Ascending aorta (tissue), 2 donors: ENCODE measurements at regions of chr5 and their contacts with region 1.

Region 1: GRCh38 chr5:7391814-7392692 is 3.9 kb upstream of the ADCY2 start:
- DNase-seq: no peak
- H3K4me3 ChIP-seq: no peak overlapping the region
- H3K27ac ChIP-seq: no peak overlapping the region
- H3K4me1 ChIP-seq: peaks cover 3% of the 10 kb centered on the region in 2 donors
- H3K27me3 ChIP-seq: no peaks in the 10 kb centered on the region
- CTCF ChIP-seq: peak; percentile 13 to 65 (median 54)

Region 2: DNA sequence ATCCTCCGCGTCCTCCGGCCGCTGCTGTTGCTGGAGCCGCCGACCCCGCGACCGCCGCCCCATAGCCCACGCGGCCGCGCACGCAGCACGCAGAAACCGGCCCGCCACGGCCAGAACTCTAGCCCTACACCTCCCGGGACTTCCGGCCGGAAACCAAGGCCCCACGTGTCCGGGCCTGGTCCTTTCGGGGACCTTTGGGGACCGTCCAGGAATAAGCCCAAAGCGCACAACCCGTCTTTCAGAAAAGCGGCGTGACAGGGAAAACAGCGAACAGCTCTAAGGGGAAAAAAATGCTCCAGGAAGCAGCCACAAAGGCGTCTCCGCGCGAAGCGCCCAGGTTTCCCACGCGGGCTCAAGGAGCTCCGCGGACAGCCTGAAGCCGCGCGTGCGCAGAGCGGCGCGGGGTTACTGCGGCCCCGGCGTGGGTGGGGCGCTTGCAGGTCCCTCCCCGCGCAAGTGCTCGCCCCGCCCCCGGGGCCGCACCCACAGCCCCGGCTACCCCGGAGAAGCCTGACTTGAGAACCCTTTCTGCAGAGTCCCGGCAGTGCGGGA is 759.1 kb before region 1 on chr5 and contains the starts of genes NSUN2 and SRD5A1:
- intact Hi-C with region 1: loop called (anchors 10 kb)
- DNase-seq: peak; percentile 56 to 95
- H3K4me3 ChIP-seq: peak within 1 kb of the TSS; percentile 74 to 87
- H3K27ac ChIP-seq: peak within 1 kb of the TSS; percentile 83 to 97
- H3K4me1 ChIP-seq: peaks cover 0 to 14% of the 10 kb centered on the region in 2 donors
- H3K27me3 ChIP-seq: no peaks in the 10 kb centered on the region
- CTCF ChIP-seq: no peak
- total RNA-seq, gene NSUN2: 19.1 TPM
- total RNA-seq, gene SRD5A1: 186 TPM

Region 3: GRCh38 chr5:7261049-7261448 is 131.0 kb before region 1 on chr5:
- intact Hi-C with region 1: loop called (anchors 10 kb)
- DNase-seq: no peak
- H3K4me3 ChIP-seq: no peak overlapping the region
- H3K27ac ChIP-seq: no peak overlapping the region
- H3K4me1 ChIP-seq: no peaks in the 10 kb centered on the region
- H3K27me3 ChIP-seq: no peaks in the 10 kb centered on the region
- CTCF ChIP-seq: peak; percentile 29 to 57 (median 33)

Region 4: DNA sequence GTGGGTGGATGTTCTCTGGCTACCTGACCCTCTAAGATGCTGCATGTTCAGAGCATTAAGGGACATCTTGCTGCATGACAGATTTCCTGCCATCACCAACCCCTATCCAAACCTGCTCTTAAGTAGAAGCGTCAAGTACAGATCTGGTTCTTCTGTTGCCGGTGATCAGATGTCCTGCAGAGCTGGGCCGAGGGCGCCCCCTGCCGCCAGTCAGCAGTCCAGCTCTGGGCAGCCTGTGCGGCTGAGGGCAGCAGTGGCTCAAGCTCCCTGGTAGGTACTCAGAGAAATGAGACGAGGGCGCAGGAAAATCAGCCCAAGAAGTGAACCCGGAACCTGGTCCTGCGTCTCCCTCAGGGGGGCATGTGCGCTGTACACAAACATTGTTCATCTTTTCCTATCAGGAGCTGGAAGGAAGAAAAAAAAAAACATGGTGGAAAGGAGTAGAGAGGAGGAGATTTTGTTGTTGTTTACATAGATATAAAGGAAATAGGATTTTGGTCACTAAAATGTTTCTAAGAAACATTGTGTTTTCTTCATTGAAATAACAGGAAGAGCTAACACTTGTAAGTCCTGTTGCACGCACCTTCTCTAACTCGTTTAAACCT is 363.0 kb after region 1 on chr5:
- intact Hi-C with region 1: loop called (anchors 2 kb)
- DNase-seq: no peak
- H3K4me3 ChIP-seq: no peak overlapping the region
- H3K27ac ChIP-seq: no peak overlapping the region
- H3K4me1 ChIP-seq: peaks cover 0 to 6% of the 10 kb centered on the region in 2 donors
- H3K27me3 ChIP-seq: no peaks in the 10 kb centered on the region
- CTCF ChIP-seq: peak; percentile 41 to 75 (median 63)

Region 5: GRCh38 chr5:7856855-7857254 is 464.8 kb after region 1 on chr5:
- intact Hi-C with region 1: loop called (anchors 10 kb)
- DNase-seq: no peak
- H3K4me3 ChIP-seq: no peak overlapping the region
- H3K27ac ChIP-seq: no peak overlapping the region
- H3K4me1 ChIP-seq: no peaks in the 10 kb centered on the region
- H3K27me3 ChIP-seq: no peaks in the 10 kb centered on the region
- CTCF ChIP-seq: peak; percentile 31 to 41 (median 38)